GM12878 (cell line): ENCODE measurements at regions of chr4 and their contacts with region 1.

Region 1: GRCh38 chr4:113499696-113500095 is 261.8 kb downstream of the CAMK2D start:
- DNase-seq: no peak
- ATAC-seq: no peak
- H3K4me3 ChIP-seq: no peak overlapping the region
- H3K27ac ChIP-seq: no peak overlapping the region
- H3K4me1 ChIP-seq: no peaks in the 10 kb centered on the region
- H3K27me3 ChIP-seq: no peaks in the 10 kb centered on the region
- CTCF ChIP-seq: no peak
- EP300 ChIP-seq: no peak
- POLR2A ChIP-seq: no peak
- RAD21 ChIP-seq: no peak

Region 2: GRCh38 chr4:112881842-112882241 is 617.9 kb before region 1 on chr4:
- CTCF ChIA-PET with region 1: no interaction called
- POLR2A ChIA-PET with region 1: no interaction called
- RAD21 ChIA-PET with region 1: no interaction called
- SMC1A ChIA-PET with region 1: no interaction called
- in situ Hi-C with region 1: no loop called
- intact Hi-C with region 1: no loop called
- DNase-seq: no peak
- ATAC-seq: no peak
- H3K4me3 ChIP-seq: no peak overlapping the region
- H3K27ac ChIP-seq: no peak overlapping the region
- H3K4me1 ChIP-seq: no peaks in the 10 kb centered on the region
- H3K27me3 ChIP-seq: no peaks in the 10 kb centered on the region
- CTCF ChIP-seq: no peak
- EP300 ChIP-seq: no peak
- POLR2A ChIP-seq: no peak
- RAD21 ChIP-seq: no peak

Region 3: GRCh38 chr4:113316879-113317278 is 182.8 kb before region 1 on chr4:
- CTCF ChIA-PET with region 1: no interaction called
- POLR2A ChIA-PET with region 1: no interaction called
- RAD21 ChIA-PET with region 1: no interaction called
- SMC1A ChIA-PET with region 1: no interaction called
- in situ Hi-C with region 1: no loop called
- intact Hi-C with region 1: no loop called
- DNase-seq: peak; percentile 75
- ATAC-seq: peak; percentile 98
- H3K4me3 ChIP-seq: no peak overlapping the region; the same call in 1 of the 2 replicates
- H3K27ac ChIP-seq: 0 out of 2 replicates have a peak overlapping the region, but pooled peaks have one; percentile 4
- H3K4me1 ChIP-seq: peaks cover 7% of the 10 kb centered on the region; the same call in 1 of the 2 replicates
- H3K27me3 ChIP-seq: no peaks in the 10 kb centered on the region
- CTCF ChIP-seq: no peak
- EP300 ChIP-seq: no peak
- POLR2A ChIP-seq: no peak
- RAD21 ChIP-seq: no peak

Region 4: DNA sequence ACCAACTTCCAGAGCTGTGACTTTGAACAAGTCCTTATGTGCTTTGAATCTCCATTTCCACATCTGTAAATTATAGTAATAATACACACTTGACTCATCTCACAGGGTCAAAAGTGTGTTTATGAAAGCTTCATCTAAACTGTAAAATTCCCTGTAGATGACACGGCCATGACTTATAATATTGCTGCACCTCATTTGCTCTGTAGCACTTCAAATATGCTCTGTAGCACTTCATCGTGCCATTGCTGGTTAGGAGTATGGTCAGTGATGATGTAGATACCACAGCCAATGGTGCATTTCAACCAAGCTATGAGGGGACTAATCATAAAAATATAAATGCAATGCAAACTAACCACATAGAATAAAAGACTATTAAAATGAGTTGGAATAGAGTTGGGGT is 131.6 kb before region 1 on chr4:
- CTCF ChIA-PET with region 1: no interaction called
- POLR2A ChIA-PET with region 1: no interaction called
- RAD21 ChIA-PET with region 1: no interaction called
- SMC1A ChIA-PET with region 1: no interaction called
- in situ Hi-C with region 1: no loop called
- intact Hi-C with region 1: no loop called
- DNase-seq: no peak
- ATAC-seq: no peak
- H3K4me3 ChIP-seq: no peak overlapping the region
- H3K27ac ChIP-seq: no peak overlapping the region
- H3K4me1 ChIP-seq: no peaks in the 10 kb centered on the region
- H3K27me3 ChIP-seq: no peaks in the 10 kb centered on the region
- CTCF ChIP-seq: no peak
- EP300 ChIP-seq: no peak
- POLR2A ChIP-seq: no peak
- RAD21 ChIP-seq: no peak

Region 5: GRCh38 chr4:113481820-113482219 is 17.9 kb before region 1 on chr4:
- CTCF ChIA-PET with region 1: interaction called, 11 read pairs
- POLR2A ChIA-PET with region 1: no interaction called
- RAD21 ChIA-PET with region 1: no interaction called
- SMC1A ChIA-PET with region 1: interaction called, 8 read pairs
- in situ Hi-C with region 1: no loop called
- intact Hi-C with region 1: no loop called
- DNase-seq: no peak
- ATAC-seq: no peak
- H3K4me3 ChIP-seq: no peak overlapping the region
- H3K27ac ChIP-seq: no peak overlapping the region
- H3K4me1 ChIP-seq: no peaks in the 10 kb centered on the region
- H3K27me3 ChIP-seq: no peaks in the 10 kb centered on the region
- CTCF ChIP-seq: no peak
- EP300 ChIP-seq: no peak
- POLR2A ChIP-seq: no peak
- RAD21 ChIP-seq: no peak